ENCODE measurements at regions of chrX and their contacts with region 1.

Region 1: DNA sequence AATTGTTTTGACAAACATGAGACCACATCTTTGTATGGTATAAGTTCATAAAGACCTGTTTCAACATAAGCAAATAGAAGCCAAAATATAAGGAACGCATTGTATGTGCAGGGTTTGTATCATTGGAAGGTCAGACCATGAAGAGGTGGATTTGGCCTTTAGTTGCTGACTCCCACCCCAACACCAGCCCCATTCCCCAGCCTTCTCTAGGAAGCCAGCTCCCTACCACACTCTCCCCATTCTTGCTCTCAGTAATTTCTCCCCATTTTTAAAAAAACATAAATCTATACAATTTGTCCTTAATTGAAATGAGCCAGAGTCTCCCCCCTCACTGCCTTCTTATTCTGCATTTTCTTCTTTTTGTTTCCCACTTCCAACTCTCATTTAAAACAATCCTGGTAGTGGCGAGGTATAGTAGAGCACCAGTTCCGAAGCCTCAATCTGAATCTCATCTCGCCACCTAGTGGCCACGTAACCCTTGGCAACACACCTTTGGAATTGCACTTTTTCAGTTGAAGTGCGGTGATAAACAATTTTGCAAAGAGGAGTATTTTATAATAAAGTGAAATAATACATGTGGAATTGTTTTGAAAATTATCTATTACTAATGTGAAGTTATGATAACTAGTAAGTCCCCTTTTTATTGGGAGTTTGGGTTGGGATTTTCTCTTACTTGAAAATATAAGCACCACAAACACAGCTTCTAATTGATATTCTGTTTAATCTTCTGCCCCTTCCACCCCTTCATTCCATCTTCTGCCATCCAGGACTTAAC is 126.6 kb downstream of the ASB9 start:
- DNase-seq: peak; percentile 8 to 68 (median 56)
- ATAC-seq: peak; percentile 66
- H3K4me3 ChIP-seq: no peak overlapping the region
- H3K4me3 Mint-ChIP-seq: peak overlapping the region; percentile 50
- H3K27ac ChIP-seq: peak overlapping the region in 1 of 2 experiments; percentile 31
- H3K27ac Mint-ChIP-seq: peak overlapping the region; percentile 75
- H3K4me1 ChIP-seq: peaks cover 5% of the 10 kb centered on the region
- H3K4me1 Mint-ChIP-seq: peaks cover 17% of the 10 kb centered on the region
- H3K27me3 ChIP-seq: no peaks in the 10 kb centered on the region
- H3K27me3 Mint-ChIP-seq: no peaks in the 10 kb centered on the region
- CTCF ChIP-seq: peak; percentile 70

Region 2: DNA sequence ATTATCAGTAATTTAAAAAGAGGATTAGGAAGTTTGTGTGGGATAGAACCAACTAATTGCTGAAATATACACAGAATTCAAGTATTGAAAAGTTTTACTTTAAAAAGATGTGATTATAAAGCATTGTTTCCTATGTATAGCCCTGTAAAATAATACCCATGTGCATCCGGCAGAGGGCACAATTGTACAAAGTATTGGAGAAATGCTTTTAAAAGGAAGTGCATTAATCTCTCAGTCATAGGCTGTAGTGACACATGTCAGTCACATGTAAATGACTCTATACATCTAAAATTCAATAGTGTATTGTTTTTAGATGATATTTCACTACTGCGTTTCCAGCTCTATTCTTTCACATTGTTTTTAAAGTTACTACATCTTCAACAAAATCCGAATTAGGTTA is 1103.9 kb before region 1 on chrX:
- CTCF ChIA-PET with region 1: interaction called, 3 read pairs
- POLR2A ChIA-PET with region 1: no interaction called
- intact Hi-C with region 1: loop called (anchors 1 to 2 kb)
- DNase-seq: peak; percentile 5 to 74 (median 57)
- ATAC-seq: peak; percentile 82
- H3K4me3 ChIP-seq: no peak overlapping the region
- H3K4me3 Mint-ChIP-seq: no peak overlapping the region
- H3K27ac ChIP-seq: no peak overlapping the region
- H3K27ac Mint-ChIP-seq: no peak overlapping the region
- H3K4me1 ChIP-seq: no peaks in the 10 kb centered on the region
- H3K4me1 Mint-ChIP-seq: no peaks in the 10 kb centered on the region
- H3K27me3 ChIP-seq: no peaks in the 10 kb centered on the region
- H3K27me3 Mint-ChIP-seq: no peaks in the 10 kb centered on the region
- CTCF ChIP-seq: peak; percentile 64

Region 3: DNA sequence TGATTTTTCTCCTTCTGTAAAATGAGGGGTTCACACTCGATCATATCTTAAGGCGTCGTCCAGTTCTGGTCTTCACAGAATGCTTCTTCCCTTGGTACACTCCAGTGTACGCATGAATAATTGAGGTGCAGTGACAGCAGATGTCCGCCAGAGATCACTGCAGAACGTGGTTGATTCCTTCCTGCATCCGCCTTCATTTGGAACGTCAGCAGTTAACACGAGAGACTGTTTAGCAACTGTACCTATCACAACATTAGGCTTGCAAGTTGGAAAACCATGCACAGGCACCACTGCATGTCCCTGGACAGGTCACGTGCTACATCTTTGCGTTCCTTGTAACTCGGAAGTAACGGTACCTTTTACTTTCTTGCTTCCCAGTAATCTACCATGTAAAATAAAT is 1047.5 kb before region 1 on chrX:
- CTCF ChIA-PET with region 1: interaction called, 9 read pairs
- POLR2A ChIA-PET with region 1: no interaction called
- intact Hi-C with region 1: loop called in 1 of 2 experiments (anchors 5 kb)
- DNase-seq: peak in 8 of 9 experiments; percentile 1 to 57 (median 20)
- ATAC-seq: peak; percentile 55
- H3K4me3 ChIP-seq: no peak overlapping the region
- H3K4me3 Mint-ChIP-seq: peak overlapping the region; percentile 12
- H3K27ac ChIP-seq: no peak overlapping the region
- H3K27ac Mint-ChIP-seq: no peak overlapping the region
- H3K4me1 ChIP-seq: no peaks in the 10 kb centered on the region
- H3K4me1 Mint-ChIP-seq: peaks cover 2% of the 10 kb centered on the region
- H3K27me3 ChIP-seq: no peaks in the 10 kb centered on the region
- H3K27me3 Mint-ChIP-seq: no peaks in the 10 kb centered on the region
- CTCF ChIP-seq: peak; percentile 42

Region 4: DNA sequence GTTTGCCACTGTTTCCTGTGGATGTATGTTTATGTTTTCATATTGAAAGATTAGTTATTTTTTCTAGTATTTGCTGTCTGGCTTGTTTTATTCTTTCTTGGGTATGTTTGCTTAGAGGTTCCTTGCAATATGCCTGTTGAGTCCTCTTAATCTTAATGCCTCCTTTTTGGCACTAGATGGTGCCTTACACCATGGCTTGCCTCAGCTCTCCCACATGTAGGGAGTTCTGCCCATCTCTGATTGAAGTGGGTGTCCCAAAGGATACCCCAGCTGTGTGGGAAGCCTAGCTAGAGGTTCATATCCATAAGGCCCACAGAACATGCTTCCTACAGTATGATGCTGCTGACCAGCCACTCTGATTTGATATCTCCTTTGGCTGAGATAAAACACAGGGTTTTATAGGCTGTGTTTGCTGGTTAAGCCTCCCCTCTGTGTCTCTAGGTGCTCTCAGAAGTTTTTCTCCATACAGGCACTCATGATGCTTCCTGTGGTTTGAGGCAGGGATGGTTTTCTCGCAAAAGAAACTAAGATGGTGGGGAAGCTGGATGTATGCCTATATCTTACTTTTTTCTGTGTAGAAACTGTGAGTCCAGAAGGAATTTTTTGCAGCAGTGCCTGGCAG is 35.8 kb before region 1 on chrX:
- CTCF ChIA-PET with region 1: interaction called, 15 read pairs
- POLR2A ChIA-PET with region 1: no interaction called
- intact Hi-C with region 1: loop called in 1 of 2 experiments (anchors 1 kb)
- DNase-seq: peak in 2 of 9 experiments; percentile 23 to 38
- ATAC-seq: no peak
- H3K4me3 ChIP-seq: no peak overlapping the region
- H3K4me3 Mint-ChIP-seq: no peak overlapping the region
- H3K27ac ChIP-seq: no peak overlapping the region
- H3K27ac Mint-ChIP-seq: no peak overlapping the region
- H3K4me1 ChIP-seq: no peaks in the 10 kb centered on the region
- H3K4me1 Mint-ChIP-seq: peaks cover 15% of the 10 kb centered on the region
- H3K27me3 ChIP-seq: no peaks in the 10 kb centered on the region
- H3K27me3 Mint-ChIP-seq: peaks cover 3% of the 10 kb centered on the region
- CTCF ChIP-seq: no peak

Region 5: GRCh38 chrX:15177316-15177715 is 34.1 kb after region 1 on chrX:
- CTCF ChIA-PET with region 1: no interaction called
- POLR2A ChIA-PET with region 1: no interaction called
- intact Hi-C with region 1: no loop called
- DNase-seq: no peak
- ATAC-seq: no peak
- H3K4me3 ChIP-seq: no peak overlapping the region
- H3K4me3 Mint-ChIP-seq: no peak overlapping the region
- H3K27ac ChIP-seq: no peak overlapping the region
- H3K27ac Mint-ChIP-seq: no peak overlapping the region
- H3K4me1 ChIP-seq: no peaks in the 10 kb centered on the region
- H3K4me1 Mint-ChIP-seq: no peaks in the 10 kb centered on the region
- H3K27me3 ChIP-seq: no peaks in the 10 kb centered on the region
- H3K27me3 Mint-ChIP-seq: no peaks in the 10 kb centered on the region
- CTCF ChIP-seq: no peak

Measured in CD8-positive, alpha-beta T cell (primary cell).